CD14-positive monocyte (primary cell): ENCODE measurements at regions of chr17 and their contacts with region 1.

Region 1: DNA sequence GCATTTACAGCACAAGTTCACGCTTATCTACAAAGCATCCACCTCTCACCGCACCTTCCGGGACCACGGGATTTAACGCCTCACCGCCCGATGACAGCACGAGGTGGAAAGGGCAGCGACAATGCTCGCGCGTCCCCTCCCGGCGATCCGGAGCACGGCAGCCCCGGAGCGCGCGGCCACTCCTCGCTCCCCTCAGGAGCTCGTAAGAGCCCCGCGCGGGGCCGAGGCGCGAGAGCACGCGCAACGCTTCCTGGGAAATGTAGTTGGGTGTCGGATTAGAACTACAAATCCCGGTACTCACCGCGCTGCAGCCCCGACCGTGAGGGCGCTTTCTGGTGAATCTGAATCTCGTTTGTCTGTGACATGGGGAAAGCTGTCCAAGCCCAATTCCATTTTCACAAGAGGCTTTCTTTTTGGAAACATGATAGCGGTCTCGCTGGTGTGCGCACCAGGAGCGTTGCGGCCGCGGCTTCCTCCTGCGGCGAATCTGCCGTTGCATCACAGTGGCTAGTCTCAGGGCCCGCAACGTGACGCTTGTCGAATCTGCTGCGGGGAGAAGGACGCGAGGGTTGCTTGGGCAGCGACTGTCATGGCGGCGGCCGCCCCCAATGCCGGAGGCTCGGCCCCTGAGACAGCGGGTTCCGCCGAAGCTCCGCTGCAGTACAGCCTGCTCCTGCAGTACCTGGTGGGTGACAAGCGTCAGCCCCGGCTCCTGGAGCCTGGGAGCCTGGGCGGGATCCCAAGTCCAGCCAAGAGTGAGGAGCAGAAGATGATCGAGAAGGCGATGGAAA is at the start of gene TIMM22:
- DNase-seq: peak; percentile 95
- H3K4me3 ChIP-seq: peak within 1 kb of the TSS; percentile 70 to 98 (median 98)
- H3K4me3 Mint-ChIP-seq: peak within 1 kb of the TSS; percentile 95 to 97
- H3K27ac ChIP-seq: peak within 1 kb of the TSS; percentile 58 to 91
- H3K27ac Mint-ChIP-seq: peak within 1 kb of the TSS; percentile 93 to 99 (median 98)
- H3K4me1 ChIP-seq: peaks cover 11 to 16% of the 10 kb centered on the region in 2 donors
- H3K4me1 Mint-ChIP-seq: peaks cover 12% of the 10 kb centered on the region
- H3K27me3 ChIP-seq: no peaks in the 10 kb centered on the region
- H3K27me3 Mint-ChIP-seq: peaks cover 1 to 2% (median 2%) of the 10 kb centered on the region in 3 donors
- CTCF ChIP-seq: peak; percentile 82
- polyA plus RNA-seq, gene TIMM22: 3.2 to 13.6 (median 13.1) TPM

Region 2: DNA sequence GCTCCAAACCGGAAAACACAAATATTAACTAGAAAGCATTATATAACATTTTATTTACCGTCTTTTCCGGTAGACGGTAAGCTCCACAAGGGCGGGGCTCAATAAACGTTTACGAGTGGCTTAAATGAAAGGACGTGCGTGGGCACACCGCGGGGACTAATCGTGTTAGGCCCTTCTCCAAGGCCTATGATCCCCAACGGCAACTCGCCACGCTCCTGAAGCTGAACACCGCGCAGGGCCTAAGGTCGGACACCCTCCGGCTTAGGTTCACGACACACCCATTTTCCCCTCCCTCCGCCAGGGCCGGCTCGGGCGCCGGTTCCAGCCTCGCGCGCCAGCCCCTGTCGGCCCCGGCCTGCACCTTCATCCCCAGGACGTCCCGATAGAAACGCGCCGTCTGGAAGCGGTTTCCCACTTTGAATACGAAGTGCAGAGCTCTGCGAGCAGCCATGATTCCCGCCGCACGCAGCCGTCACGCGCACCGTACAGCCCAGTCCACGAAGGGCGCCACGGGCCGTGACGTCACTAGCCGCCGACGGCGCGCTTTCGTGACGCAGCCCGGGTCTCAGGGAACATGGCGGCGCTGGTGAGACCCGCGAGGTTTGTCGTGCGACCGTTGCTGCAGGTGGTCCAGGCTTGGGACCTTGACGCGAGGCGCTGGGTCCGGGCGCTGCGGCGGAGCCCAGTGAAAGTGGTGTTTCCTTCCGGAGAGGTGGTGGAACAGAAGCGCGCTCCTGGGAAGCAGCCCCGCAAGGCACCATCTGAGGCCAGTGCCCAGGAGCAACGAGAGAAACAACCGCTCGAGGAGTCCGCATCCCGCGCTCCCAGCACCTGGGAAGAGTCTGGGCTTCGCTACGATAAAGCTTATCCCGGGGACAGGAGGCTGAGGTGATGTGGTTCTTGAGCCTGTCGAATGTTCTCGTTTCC is 214.7 kb before region 1 on chr17 and contains the starts of genes GLOD4 and MRM3:
- intact Hi-C with region 1: loop called (anchors 1 to 2 kb)
- DNase-seq: peak; percentile 90 to 93 (median 92)
- H3K4me3 ChIP-seq: peak within 1 kb of the TSS; percentile 81 to 98 (median 86)
- H3K4me3 Mint-ChIP-seq: peak within 1 kb of the TSS; percentile 94 to 98
- H3K27ac ChIP-seq: peak within 1 kb of the TSS; percentile 51 to 97
- H3K27ac Mint-ChIP-seq: peak within 1 kb of the TSS; percentile 92 to 99 (median 96)
- H3K4me1 ChIP-seq: peaks cover 17 to 24% of the 10 kb centered on the region in 2 donors
- H3K4me1 Mint-ChIP-seq: peaks cover 16% of the 10 kb centered on the region
- H3K27me3 ChIP-seq: no peaks in the 10 kb centered on the region
- H3K27me3 Mint-ChIP-seq: peaks cover 0 to 2% (median 1%) of the 10 kb centered on the region in 3 donors
- CTCF ChIP-seq: no peak
- polyA plus RNA-seq, gene GLOD4: 41.8 to 50.7 (median 50.6) TPM
- polyA plus RNA-seq, gene MRM3: 9.3 to 15.4 (median 12.8) TPM

Region 3: GRCh38 chr17:794876-795275 is 201.9 kb before region 1 on chr17:
- intact Hi-C with region 1: loop called in 1 of 2 experiments (anchors 5 kb)
- DNase-seq: peak in 2 of 3 donors; percentile 16 to 34
- H3K4me3 ChIP-seq: no peak overlapping the region
- H3K4me3 Mint-ChIP-seq: peak overlapping the region in 1 of 2 donors; percentile 51
- H3K27ac ChIP-seq: no peak overlapping the region
- H3K27ac Mint-ChIP-seq: no peak overlapping the region
- H3K4me1 ChIP-seq: no peaks in the 10 kb centered on the region
- H3K4me1 Mint-ChIP-seq: peaks cover 7% of the 10 kb centered on the region
- H3K27me3 ChIP-seq: no peaks in the 10 kb centered on the region
- H3K27me3 Mint-ChIP-seq: peaks cover 4 to 7% (median 6%) of the 10 kb centered on the region in 3 donors
- CTCF ChIP-seq: peak; percentile 62

Region 4: GRCh38 chr17:879549-880442 is 117.0 kb before region 1 on chr17:
- intact Hi-C with region 1: loop called in 1 of 2 experiments (anchors 5 kb)
- DNase-seq: peak; percentile 34 to 52 (median 35)
- H3K4me3 ChIP-seq: no peak overlapping the region
- H3K4me3 Mint-ChIP-seq: no peak overlapping the region
- H3K27ac ChIP-seq: no peak overlapping the region
- H3K27ac Mint-ChIP-seq: no peak overlapping the region
- H3K4me1 ChIP-seq: no peaks in the 10 kb centered on the region
- H3K4me1 Mint-ChIP-seq: peaks cover 12% of the 10 kb centered on the region
- H3K27me3 ChIP-seq: no peaks in the 10 kb centered on the region
- H3K27me3 Mint-ChIP-seq: peaks cover 14 to 35% (median 23%) of the 10 kb centered on the region in 3 donors
- CTCF ChIP-seq: peak; percentile 70

Region 5: GRCh38 chr17:1031711-1032110 is 35.0 kb after region 1 on chr17:
- intact Hi-C with region 1: no loop called
- DNase-seq: no peak
- H3K4me3 ChIP-seq: no peak overlapping the region
- H3K4me3 Mint-ChIP-seq: no peak overlapping the region
- H3K27ac ChIP-seq: no peak overlapping the region
- H3K27ac Mint-ChIP-seq: no peak overlapping the region
- H3K4me1 ChIP-seq: no peaks in the 10 kb centered on the region
- H3K4me1 Mint-ChIP-seq: peaks cover 13% of the 10 kb centered on the region
- H3K27me3 ChIP-seq: no peaks in the 10 kb centered on the region
- H3K27me3 Mint-ChIP-seq: no peaks in the 10 kb centered on the region
- CTCF ChIP-seq: no peak